ENCODE measurements at regions of chrX and their contacts with region 1.

Region 1: GRCh38 chrX:111719426-111720210 is 38.6 kb downstream of the ALG13 start:
- DNase-seq: no peak
- ATAC-seq: no peak
- H3K4me3 ChIP-seq: no peak overlapping the region
- H3K27ac ChIP-seq: no peak overlapping the region
- H3K4me1 ChIP-seq: no peaks in the 10 kb centered on the region
- H3K27me3 ChIP-seq: no peaks in the 10 kb centered on the region
- CTCF ChIP-seq: peak; percentile 57; the same call in 1 of the 2 replicates

Region 2: GRCh38 chrX:112043997-112044396 is 324.4 kb after region 1 on chrX:
- CTCF ChIA-PET with region 1: no interaction called
- POLR2A ChIA-PET with region 1: no interaction called
- in situ Hi-C with region 1: no loop called
- intact Hi-C with region 1: loop called (anchors 2 kb)
- DNase-seq: peak; percentile 7
- ATAC-seq: no peak
- H3K4me3 ChIP-seq: no peak overlapping the region
- H3K27ac ChIP-seq: no peak overlapping the region
- H3K4me1 ChIP-seq: no peaks in the 10 kb centered on the region
- H3K27me3 ChIP-seq: no peaks in the 10 kb centered on the region
- CTCF ChIP-seq: peak; percentile 39; the same call in 1 of the 2 replicates